ENCODE measurements at regions of chr10 and their contacts with region 1.

Region 1: GRCh38 chr10:34538281-34538829 is 276.7 kb downstream of the PARD3 start:
- DNase-seq: no peak
- ATAC-seq: peak in 1 of 2 donors; percentile 10
- H3K4me3 ChIP-seq: no peak overlapping the region
- H3K27ac ChIP-seq: no peak overlapping the region
- H3K4me1 ChIP-seq: peaks cover 6% of the 10 kb centered on the region
- H3K27me3 ChIP-seq: no peaks in the 10 kb centered on the region

Region 2: GRCh38 chr10:34628174-34628796 is 89.9 kb after region 1 on chr10:
- intact Hi-C with region 1: loop called in 1 of 4 experiments (anchors 10 kb)
- DNase-seq: peak; percentile 80 to 90 (median 86)
- ATAC-seq: peak; percentile 95 to 96
- H3K4me3 ChIP-seq: no peak overlapping the region
- H3K27ac ChIP-seq: no peak overlapping the region
- H3K4me1 ChIP-seq: peaks cover 2% of the 10 kb centered on the region
- H3K27me3 ChIP-seq: no peaks in the 10 kb centered on the region

Measured in right cardiac atrium (tissue), 5 donors.